ENCODE measurements at regions of chr5 and their contacts with region 1.

Region 1: DNA sequence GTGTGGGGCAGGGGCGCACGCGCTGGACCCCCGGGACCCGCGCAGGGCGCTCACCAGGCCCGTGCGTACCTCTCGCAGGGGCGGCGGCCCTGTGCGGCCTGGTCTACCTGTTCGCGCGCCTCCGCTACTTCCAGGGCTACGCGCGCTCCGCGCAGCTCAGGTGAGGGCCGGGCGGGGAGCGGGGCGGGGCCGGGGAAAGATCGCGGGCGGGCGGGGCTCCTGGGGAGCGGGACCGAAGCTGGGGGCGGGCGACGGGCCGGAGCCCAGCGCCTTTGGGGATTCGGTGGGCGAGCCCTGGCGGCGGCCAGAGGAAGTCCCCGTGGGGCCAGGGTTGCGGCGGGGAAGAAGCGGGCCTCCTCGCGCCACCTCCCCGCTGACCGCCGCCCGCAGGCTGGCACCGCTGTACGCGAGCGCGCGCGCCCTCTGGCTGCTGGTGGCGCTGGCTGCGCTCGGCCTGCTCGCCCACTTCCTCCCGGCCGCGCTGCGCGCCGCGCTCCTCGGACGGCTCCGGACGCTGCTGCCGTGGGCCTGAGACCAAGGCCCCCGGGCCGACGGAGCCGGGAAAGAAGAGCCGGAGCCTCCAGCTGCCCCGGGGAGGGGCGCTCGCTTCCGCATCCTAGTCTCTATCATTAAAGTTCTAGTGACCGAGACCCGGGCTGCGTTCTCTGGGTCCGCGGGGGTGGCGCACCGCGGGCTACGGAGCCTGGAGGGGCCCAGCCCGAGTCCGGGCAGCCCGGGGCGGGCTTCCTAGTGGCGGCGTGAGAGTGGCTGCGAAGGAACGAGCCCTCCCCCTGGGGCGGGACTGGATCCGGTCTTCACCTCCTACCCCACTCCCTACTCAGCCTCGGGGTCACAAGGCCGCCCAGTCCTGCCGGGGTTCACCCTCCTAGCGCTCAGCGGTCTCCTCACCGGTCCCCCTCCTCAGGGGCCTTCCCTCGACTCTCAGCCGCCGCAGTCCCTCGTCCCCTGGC is 2.4 kb downstream of the LTC4S start:
- DNase-seq: peak in 1 of 2 donors; percentile 93
- H3K4me3 ChIP-seq: peak overlapping the region; percentile 55 to 60
- H3K27ac ChIP-seq: peak overlapping the region; percentile 94
- H3K4me1 ChIP-seq: peaks cover 45% of the 10 kb centered on the region
- H3K27me3 ChIP-seq: no peaks in the 10 kb centered on the region
- CTCF ChIP-seq: peak; percentile 54 to 93 (median 54)
- POLR2A ChIP-seq: no peak

Region 2: GRCh38 chr5:179680780-179681401 is 115.3 kb before region 1 on chr5 and contains the start of gene CBY3:
- intact Hi-C with region 1: loop called (anchors 10 kb)
- DNase-seq: no peak
- H3K4me3 ChIP-seq: no peak within 1 kb of the TSS
- H3K27ac ChIP-seq: no peak within 1 kb of the TSS
- H3K4me1 ChIP-seq: peaks cover 33% of the 10 kb centered on the region
- H3K27me3 ChIP-seq: no peaks in the 10 kb centered on the region
- CTCF ChIP-seq: no peak
- POLR2A ChIP-seq: no peak
- total RNA-seq, gene CBY3: not detected

Region 3: GRCh38 chr5:179763215-179763945 is 32.8 kb before region 1 on chr5:
- intact Hi-C with region 1: loop called (anchors 5 kb)
- DNase-seq: no peak
- H3K4me3 ChIP-seq: no peak overlapping the region
- H3K27ac ChIP-seq: peak overlapping the region; percentile 53
- H3K4me1 ChIP-seq: peaks cover 73% of the 10 kb centered on the region
- H3K27me3 ChIP-seq: no peaks in the 10 kb centered on the region
- CTCF ChIP-seq: peak; percentile 51 to 85 (median 77)
- POLR2A ChIP-seq: no peak